ENCODE measurements at regions of chr15 and their contacts with region 1.

Region 1: DNA sequence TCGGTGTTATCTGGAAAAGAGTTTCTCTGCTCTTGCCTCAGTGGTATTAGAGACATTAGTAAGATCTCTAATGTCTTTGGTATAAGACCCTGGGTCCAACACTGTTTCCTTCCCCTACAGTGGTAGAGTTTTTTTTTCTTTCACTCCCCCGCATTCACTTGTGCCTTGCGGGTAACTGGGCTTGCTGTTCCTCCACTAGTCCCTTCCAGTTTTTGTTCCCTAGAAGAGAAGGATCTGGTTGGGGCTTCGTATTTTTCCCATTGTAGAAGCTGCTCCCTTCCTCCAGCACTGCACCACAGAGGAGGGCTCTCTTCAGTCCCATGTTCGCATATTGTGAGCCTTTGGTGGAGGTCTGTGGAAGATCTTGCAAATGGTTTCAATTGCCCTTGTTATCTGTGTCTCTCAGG is 13.7 kb downstream of the CTDSPL2 start:
- DNase-seq: no peak
- H3K4me3 ChIP-seq: no peak overlapping the region
- H3K27ac ChIP-seq: no peak overlapping the region
- H3K4me1 ChIP-seq: peaks cover 0 to 24% of the 10 kb centered on the region in 2 donors
- H3K27me3 ChIP-seq: no peaks in the 10 kb centered on the region
- CTCF ChIP-seq: no peak
- POLR2A ChIP-seq: no peak

Region 2: DNA sequence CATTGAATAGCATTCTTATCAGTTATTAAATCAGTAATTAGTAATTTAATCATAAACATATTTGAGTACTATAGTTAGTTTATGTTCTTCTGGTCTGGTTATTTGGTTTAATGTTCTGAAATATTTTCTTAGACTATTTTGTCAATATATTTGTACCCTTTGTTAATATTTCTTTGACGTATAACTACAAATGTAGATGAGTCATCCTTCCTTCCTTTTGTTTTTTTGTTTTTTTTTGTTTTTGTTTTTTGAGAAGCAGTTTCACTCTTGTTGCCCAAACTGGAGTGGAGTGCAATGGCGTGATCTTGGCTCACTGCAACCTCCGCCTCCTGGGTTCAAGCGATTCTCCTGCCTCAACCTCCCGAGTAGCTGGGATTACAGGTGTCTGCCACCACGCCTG is 78.4 kb after region 1 on chr15:
- intact Hi-C with region 1: loop called in 1 of 2 experiments (anchors 10 kb)
- DNase-seq: no peak
- H3K4me3 ChIP-seq: no peak overlapping the region
- H3K27ac ChIP-seq: no peak overlapping the region
- H3K4me1 ChIP-seq: no peaks in the 10 kb centered on the region
- H3K27me3 ChIP-seq: no peaks in the 10 kb centered on the region
- CTCF ChIP-seq: no peak
- POLR2A ChIP-seq: no peak

Region 3: DNA sequence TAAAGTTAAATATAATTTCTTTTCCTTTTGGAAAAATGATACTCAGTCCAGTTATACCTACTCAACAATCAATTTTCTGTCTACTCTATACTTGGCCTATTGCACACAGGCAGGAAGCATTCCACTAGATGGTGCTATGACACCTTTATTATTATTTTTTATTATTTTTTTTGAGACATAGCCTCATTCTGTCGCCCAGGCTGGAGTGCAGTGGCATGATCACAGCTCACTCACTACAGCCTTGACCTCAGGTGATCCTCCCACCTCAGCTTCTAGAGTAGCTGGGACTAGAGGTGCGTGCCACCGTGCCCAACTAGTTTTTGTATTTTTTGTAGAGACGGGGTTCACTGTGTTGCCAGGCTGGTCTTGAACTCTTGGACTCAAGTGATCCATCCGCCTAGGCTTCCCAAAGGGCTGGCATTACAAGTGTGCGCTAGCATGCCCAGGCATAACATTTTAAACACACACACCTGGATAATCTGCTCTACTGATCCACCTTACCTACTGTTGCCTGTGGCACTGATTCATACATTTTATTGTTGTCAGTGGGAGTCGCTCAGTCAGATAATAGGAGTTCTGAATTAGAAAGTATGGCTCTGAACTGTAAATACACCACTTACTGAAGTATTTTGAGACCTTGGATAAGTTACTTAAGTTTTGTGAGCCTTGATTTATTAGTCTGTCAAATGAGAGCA is 152.1 kb after region 1 on chr15:
- intact Hi-C with region 1: no loop called
- DNase-seq: peak in 1 of 7 donors; percentile 11
- H3K4me3 ChIP-seq: no peak overlapping the region
- H3K27ac ChIP-seq: no peak overlapping the region
- H3K4me1 ChIP-seq: no peaks in the 10 kb centered on the region
- H3K27me3 ChIP-seq: no peaks in the 10 kb centered on the region
- CTCF ChIP-seq: peak in 3 of 6 experiments; percentile 27 to 45 (median 40)
- POLR2A ChIP-seq: no peak

Region 4: DNA sequence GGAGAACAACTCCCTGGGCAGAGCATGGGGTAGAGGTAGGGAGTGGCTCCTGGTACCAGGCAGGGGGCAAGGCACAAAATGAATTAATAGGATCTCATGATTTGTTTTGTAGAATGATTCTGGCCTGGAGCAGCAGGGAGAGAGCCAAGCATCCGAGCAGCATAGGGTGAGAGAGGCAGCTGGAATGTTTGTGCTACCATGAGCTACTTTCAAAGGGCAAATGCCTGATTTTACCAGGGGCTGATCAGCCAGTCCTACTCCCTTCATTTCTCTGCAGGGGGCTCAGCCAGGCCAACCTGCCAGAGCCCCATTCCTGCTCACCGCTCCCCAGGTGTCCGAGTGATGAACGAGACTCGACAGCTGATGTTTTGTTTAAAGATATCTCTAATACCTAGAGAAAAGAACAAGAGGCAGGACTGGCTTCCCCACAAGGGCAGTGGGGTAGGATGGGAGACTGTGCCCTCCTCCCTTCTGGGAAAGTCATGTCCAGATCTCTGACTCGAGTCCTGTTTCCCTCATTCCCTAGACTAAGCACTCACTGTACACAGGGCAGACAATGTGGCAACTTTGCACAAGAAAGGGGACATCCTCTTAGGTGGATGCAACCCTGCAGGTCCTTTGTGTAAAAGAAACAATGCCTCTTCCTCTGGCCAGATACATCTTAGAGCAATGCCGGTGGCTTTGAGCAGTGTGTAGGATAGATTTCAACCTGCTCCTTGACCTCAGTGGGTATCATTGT is 660.0 kb after region 1 on chr15:
- intact Hi-C with region 1: no loop called
- DNase-seq: no peak
- H3K4me3 ChIP-seq: no peak overlapping the region
- H3K27ac ChIP-seq: no peak overlapping the region
- H3K4me1 ChIP-seq: no peaks in the 10 kb centered on the region
- H3K27me3 ChIP-seq: no peaks in the 10 kb centered on the region
- CTCF ChIP-seq: no peak
- POLR2A ChIP-seq: no peak